ENCODE measurements at regions of chr20 and their contacts with region 1.

Region 1: GRCh38 chr20:18613556-18613955 is 25.7 kb downstream of the DTD1 start:
- DNase-seq: peak; percentile 37
- H3K4me3 Mint-ChIP-seq: no peak overlapping the region
- H3K27ac Mint-ChIP-seq: no peak overlapping the region
- H3K4me1 Mint-ChIP-seq: peaks cover 11% of the 10 kb centered on the region
- H3K27me3 Mint-ChIP-seq: no peaks in the 10 kb centered on the region

Region 2: DNA sequence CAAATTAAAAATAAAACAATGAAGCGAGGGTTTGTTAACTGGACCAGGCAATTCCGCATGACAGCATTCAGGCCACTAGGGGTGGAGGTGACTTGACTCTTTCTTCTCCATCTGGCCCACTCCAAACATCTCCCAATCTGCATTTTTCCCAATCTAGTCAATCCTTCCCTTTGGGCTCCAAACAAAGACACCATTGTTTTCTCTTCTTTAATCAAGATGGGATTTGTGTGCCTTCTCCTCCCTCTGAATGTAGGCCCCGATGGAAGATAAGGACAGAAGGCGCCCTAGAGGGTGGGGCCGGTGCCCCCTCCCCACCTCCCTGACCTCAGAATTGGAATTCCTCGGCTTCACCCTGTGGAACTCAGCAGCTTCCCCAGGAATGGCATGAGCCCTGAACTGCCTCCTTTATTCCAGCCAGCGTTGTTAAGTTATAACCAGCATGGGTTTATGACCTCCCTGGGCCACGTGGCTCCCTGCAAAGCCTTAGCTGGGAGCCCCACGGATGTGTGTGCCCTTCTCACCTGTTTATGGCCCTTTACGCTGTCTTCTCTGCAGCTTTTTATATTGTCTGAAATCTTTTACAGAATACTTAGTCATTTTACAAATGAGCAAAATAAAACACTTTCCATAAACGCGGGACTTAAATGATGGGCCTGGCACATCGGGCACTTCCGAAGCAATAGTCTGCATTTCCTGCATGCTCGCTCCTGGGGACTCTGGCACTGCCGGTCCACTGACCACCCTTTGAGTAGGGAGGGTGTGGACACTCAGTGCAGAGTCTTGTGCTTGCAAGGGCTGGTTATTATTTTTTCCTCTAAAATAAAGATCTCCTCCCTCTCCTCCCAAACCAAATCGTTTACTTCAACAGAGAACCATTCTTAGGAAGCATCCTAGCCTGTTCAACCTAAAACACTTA is 580.3 kb before region 1 on chr20:
- CTCF ChIA-PET with region 1: no interaction called
- POLR2A ChIA-PET with region 1: no interaction called
- intact Hi-C with region 1: no loop called
- DNase-seq: no peak
- H3K4me3 Mint-ChIP-seq: no peak overlapping the region
- H3K27ac Mint-ChIP-seq: no peak overlapping the region
- H3K4me1 Mint-ChIP-seq: no peaks in the 10 kb centered on the region
- H3K27me3 Mint-ChIP-seq: peaks cover 4% of the 10 kb centered on the region

Region 3: GRCh38 chr20:18397030-18397429 is 216.5 kb before region 1 on chr20:
- CTCF ChIA-PET with region 1: no interaction called
- POLR2A ChIA-PET with region 1: no interaction called
- intact Hi-C with region 1: no loop called
- DNase-seq: no peak
- H3K4me3 Mint-ChIP-seq: no peak overlapping the region
- H3K27ac Mint-ChIP-seq: no peak overlapping the region
- H3K4me1 Mint-ChIP-seq: no peaks in the 10 kb centered on the region
- H3K27me3 Mint-ChIP-seq: no peaks in the 10 kb centered on the region

Region 4: GRCh38 chr20:18587665-18588573 is 25.6 kb before region 1 on chr20 and contains the start of gene DTD1:
- CTCF ChIA-PET with region 1: no interaction called
- POLR2A ChIA-PET with region 1: no interaction called
- intact Hi-C with region 1: loop called (anchors 1 kb)
- DNase-seq: peak; percentile 94
- H3K4me3 Mint-ChIP-seq: peak within 1 kb of the TSS; percentile 86
- H3K27ac Mint-ChIP-seq: peak within 1 kb of the TSS; percentile 77
- H3K4me1 Mint-ChIP-seq: peaks cover 32% of the 10 kb centered on the region
- H3K27me3 Mint-ChIP-seq: peaks cover 5% of the 10 kb centered on the region
- total RNA-seq, gene DTD1: 49.2 to 55.4 TPM

Region 5: DNA sequence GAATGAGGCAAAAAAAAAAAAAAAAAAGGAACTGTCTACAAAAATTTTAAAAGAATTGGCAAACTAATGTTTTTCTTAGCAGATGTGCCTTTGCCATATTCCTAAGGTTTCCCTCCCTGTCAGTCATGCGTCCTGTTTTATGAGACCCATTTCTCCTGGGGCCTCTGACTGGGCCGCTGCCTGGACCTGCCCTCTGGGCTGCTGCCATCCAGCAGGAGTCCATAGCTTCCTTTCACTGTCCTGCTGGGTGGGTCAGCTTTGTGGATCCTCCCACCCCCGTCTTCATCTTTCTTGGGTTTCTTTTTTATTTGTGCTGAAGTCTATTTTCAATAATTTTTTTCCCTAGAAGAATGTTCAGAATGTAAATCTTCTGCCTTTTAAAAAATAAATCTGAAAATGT is 89.2 kb after region 1 on chr20:
- CTCF ChIA-PET with region 1: no interaction called
- POLR2A ChIA-PET with region 1: no interaction called
- intact Hi-C with region 1: no loop called
- DNase-seq: no peak
- H3K4me3 Mint-ChIP-seq: no peak overlapping the region
- H3K27ac Mint-ChIP-seq: no peak overlapping the region
- H3K4me1 Mint-ChIP-seq: peaks cover 7% of the 10 kb centered on the region
- H3K27me3 Mint-ChIP-seq: no peaks in the 10 kb centered on the region